Tibial artery (tissue), 4 donors: ENCODE measurements at regions of chr2 and their contacts with region 1.

Region 1: GRCh38 chr2:28566521-28567041 is 70.7 kb downstream of the PLB1 start:
- DNase-seq: peak; percentile 72 to 90
- H3K4me3 ChIP-seq: peak overlapping the region; percentile 55 to 67
- H3K27ac ChIP-seq: peak overlapping the region; percentile 58 to 62
- H3K4me1 ChIP-seq: peaks cover 0 to 27% (median 5%) of the 10 kb centered on the region in 4 donors
- H3K27me3 ChIP-seq: no peaks in the 10 kb centered on the region
- CTCF ChIP-seq: peak; percentile 100

Region 2: GRCh38 chr2:28423856-28424605 is 142.6 kb before region 1 on chr2:
- intact Hi-C with region 1: no loop called
- DNase-seq: peak in 1 of 2 donors; percentile 65
- H3K4me3 ChIP-seq: no peak overlapping the region
- H3K27ac ChIP-seq: no peak overlapping the region
- H3K4me1 ChIP-seq: peaks cover 0 to 11% (median 0%) of the 10 kb centered on the region in 4 donors
- H3K27me3 ChIP-seq: no peaks in the 10 kb centered on the region
- CTCF ChIP-seq: no peak

Region 3: GRCh38 chr2:28880193-28880592 is 313.6 kb after region 1 on chr2:
- intact Hi-C with region 1: loop called (anchors 10 kb)
- DNase-seq: no peak
- H3K4me3 ChIP-seq: no peak overlapping the region
- H3K27ac ChIP-seq: no peak overlapping the region
- H3K4me1 ChIP-seq: no peaks in the 10 kb centered on the region
- H3K27me3 ChIP-seq: peaks cover 0 to 9% of the 10 kb centered on the region in 2 donors
- CTCF ChIP-seq: no peak